ENCODE measurements at regions of chr22 and their contacts with region 1.

Region 1: GRCh38 chr22:37492428-37493344 is 6.5 kb upstream of the MFNG start:
- DNase-seq: no peak
- H3K4me3 ChIP-seq: no peak overlapping the region
- H3K27ac ChIP-seq: no peak overlapping the region
- H3K4me1 ChIP-seq: no peaks in the 10 kb centered on the region
- H3K27me3 ChIP-seq: no peaks in the 10 kb centered on the region
- CTCF ChIP-seq: no peak
- EP300 ChIP-seq: no peak
- POLR2A ChIP-seq: no peak

Region 2: DNA sequence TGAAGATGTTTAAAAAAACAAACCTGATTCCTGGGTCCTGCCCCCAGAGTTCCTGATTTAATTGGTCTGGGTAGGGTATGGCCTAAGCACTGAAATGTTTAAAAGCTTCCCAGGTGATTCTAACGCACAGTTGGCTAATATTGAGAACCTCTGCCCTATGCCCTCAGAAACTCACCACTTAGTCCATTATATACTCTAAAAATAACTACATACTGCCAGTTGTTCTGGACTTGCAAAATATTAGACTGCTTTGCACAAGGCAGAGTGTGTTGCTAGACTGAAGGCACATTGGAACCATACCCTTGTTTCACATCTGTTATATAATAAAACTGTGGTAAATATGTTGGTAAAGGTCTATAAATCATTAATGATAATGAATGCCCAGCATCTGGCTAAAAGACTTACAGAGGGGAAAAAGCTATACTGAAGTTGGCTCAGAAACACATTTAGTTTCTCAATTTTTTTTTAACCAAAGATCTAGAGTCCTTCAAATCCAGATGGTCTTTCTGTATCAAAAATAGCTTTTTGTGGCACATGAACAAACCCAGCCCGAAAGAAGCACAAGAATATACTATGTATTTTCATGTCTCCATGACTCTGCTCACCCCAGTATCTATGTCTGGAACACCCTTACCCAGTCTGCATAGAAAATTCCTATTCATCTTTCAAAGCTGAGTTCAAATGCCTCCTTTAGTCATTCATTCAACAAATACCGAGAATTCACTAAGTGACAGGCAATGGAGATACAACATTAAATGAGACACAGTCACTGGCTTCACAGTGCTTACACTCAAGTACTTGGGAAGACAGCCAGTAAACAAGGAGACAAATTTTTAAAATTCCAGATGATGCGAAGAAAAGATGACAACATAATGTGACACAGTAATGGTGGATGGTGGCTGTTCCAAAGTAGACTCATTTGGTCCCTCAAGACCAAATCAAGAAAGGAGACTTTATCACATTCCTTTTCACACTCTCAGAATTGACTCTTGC is 1508.2 kb before region 1 on chr22:
- intact Hi-C with region 1: loop called in 1 of 4 experiments (anchors 5 kb)
- DNase-seq: no peak
- H3K4me3 ChIP-seq: no peak overlapping the region
- H3K27ac ChIP-seq: no peak overlapping the region
- H3K4me1 ChIP-seq: peaks cover 20% of the 10 kb centered on the region
- H3K27me3 ChIP-seq: no peaks in the 10 kb centered on the region
- CTCF ChIP-seq: no peak
- EP300 ChIP-seq: no peak
- POLR2A ChIP-seq: no peak

Region 3: DNA sequence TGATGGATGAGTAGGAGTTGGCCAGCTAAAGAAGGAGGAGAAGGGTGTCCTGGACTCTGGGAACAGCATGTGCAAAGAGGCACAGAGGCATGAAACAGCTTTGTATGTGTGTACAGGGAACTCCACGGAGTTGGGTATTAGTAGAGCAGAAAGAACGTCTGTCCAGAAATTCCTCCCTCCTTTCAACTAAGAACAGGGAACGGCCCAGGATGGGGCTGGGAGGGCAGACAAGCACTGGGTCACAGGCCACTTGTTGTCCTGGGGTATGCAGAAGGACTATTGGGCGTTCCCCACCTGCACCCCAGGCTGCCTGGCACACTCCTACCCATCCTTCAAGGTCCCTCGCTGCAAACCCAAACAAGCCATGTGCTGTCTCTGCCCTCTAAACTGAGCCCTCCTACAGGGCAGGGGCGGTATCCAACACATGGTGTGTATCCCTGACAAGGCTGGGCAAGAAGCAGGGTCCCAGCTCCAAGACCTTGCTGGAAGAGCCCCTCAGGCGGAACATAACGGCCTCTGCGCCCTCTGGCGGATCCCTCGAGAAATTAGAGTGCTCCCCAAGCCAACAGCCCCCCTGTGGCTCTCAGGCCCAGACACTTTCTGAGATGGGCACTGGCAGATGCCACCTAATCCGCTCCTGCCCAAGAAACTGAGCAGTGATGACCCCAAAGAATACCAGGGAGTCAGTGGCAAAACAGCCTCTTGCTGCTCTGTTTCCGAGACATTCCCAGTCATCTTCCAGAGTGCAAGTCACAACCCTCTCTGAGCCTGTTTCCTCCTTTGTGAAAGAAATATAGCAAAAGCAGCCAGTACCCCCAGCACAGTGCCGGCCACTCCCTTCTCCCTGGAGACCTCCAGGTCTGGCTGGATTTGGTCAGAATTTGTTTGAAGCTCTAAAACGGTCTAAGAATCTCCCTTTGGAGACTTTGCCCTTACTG is 63.8 kb before region 1 on chr22:
- intact Hi-C with region 1: loop called in 1 of 4 experiments (anchors 10 kb)
- DNase-seq: peak in 2 of 5 donors; percentile 36 to 48
- H3K4me3 ChIP-seq: no peak overlapping the region
- H3K27ac ChIP-seq: no peak overlapping the region
- H3K4me1 ChIP-seq: peaks cover 4% of the 10 kb centered on the region
- H3K27me3 ChIP-seq: no peaks in the 10 kb centered on the region
- CTCF ChIP-seq: no peak
- EP300 ChIP-seq: no peak
- POLR2A ChIP-seq: no peak